Psoas muscle (tissue), 8 donors: ENCODE measurements at regions of chr20 and their contacts with region 1.

Region 1: DNA sequence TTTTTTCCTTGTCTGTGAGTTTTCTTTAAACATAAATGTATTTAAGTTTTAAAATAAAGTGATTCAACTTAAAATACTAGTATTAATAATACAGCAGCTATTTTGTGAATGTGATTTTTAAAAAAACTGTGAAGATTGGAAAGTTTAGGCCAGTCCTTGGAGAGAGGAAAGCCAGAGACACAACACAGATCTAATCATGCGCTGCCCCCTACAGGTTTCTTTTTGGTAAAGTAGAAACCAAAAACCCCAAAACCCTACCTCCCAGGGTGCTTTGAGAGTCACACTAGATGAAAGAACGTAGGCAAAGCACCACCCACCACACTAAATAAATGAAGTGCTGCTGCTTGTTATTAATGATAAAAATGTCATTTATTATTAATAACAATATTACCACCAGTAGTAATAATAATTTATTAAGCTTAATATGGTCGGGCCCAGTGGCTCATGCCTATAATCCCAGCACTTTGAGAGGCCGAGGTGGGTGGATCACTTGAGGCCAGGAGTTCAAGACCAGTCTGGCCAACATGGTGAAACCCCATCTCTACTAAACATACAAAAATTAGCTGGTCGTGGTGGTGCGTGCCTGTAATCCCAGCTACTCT is 33.7 kb downstream of the SLC9A8 start:
- DNase-seq: no peak
- ATAC-seq: peak; percentile 66 to 76 (median 67)
- H3K4me3 ChIP-seq: no peak overlapping the region
- H3K27ac ChIP-seq: no peak overlapping the region
- H3K4me1 ChIP-seq: peaks cover 12% of the 10 kb centered on the region
- H3K27me3 ChIP-seq: no peaks in the 10 kb centered on the region
- CTCF ChIP-seq: peak; percentile 62

Region 2: GRCh38 chr20:49541733-49542513 is 304.4 kb before region 1 on chr20:
- intact Hi-C with region 1: loop called in 1 of 2 experiments (anchors 10 kb)
- DNase-seq: peak; percentile 64 to 76
- ATAC-seq: peak; percentile 68 to 81 (median 74)
- H3K4me3 ChIP-seq: no peak overlapping the region
- H3K27ac ChIP-seq: no peak overlapping the region
- H3K4me1 ChIP-seq: no peaks in the 10 kb centered on the region
- H3K27me3 ChIP-seq: no peaks in the 10 kb centered on the region
- CTCF ChIP-seq: peak; percentile 77

Region 3: DNA sequence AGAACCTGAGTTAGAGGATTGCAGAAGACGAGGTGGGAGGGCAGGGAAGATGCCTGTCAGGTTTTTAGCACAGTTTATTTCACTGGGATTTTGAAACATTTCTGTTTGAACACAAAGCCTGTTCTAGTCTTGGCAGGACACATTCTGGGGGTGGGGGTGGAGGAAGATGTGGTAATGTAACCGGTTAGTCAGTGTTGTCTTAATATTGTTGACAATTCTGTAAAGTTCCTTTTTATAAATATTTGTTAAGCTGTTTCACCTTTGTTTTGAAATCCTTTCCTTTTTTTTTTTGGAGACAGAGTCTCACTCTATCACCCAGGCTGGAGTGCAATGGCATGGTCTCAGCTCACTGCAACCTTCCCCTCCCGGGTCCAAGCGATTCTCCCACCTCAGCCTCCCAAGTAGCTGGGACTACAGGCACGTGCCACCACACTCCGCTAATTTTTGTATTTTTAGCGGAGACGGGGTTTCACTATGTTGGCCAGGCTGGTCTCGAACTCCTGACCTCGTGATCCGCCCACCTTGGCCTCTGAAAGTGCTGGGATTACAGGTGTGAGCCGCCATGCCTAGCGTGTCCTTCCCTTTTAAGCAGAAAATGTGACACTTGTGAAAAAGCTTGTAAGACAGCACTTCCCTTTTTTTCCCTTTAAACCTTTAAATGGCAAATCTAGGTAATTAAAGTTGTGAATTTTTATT is 13.5 kb before region 1 on chr20:
- intact Hi-C with region 1: no loop called
- DNase-seq: no peak
- ATAC-seq: peak in 2 of 4 donors; percentile 36 to 49
- H3K4me3 ChIP-seq: no peak overlapping the region
- H3K27ac ChIP-seq: no peak overlapping the region
- H3K4me1 ChIP-seq: no peaks in the 10 kb centered on the region
- H3K27me3 ChIP-seq: no peaks in the 10 kb centered on the region
- CTCF ChIP-seq: no peak

Region 4: DNA sequence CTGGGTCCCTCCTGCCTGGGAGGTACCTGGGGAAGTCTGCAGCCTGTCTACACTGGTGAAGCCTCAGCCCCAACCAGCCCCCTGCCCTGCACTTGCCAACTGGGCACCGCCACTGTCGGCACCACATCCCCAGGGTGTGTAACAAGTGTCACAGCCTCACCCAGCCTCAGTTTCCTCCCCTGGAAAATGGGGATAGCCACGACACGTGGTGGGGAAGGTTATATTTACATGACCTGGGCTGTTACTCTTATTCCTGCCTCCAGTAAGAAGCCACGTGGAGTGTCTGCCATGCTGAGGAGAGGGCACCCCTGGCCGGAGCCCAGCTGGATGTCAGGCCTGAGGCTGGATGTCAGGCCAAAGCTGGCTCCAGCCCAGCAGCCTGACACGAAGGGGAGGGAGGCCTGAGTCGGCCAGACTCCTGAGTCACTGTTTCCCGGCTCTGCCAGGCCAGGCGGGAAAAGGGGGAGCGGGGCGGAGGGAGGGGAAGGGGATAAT is 181.4 kb after region 1 on chr20:
- intact Hi-C with region 1: no loop called
- DNase-seq: peak; percentile 65 to 71
- ATAC-seq: peak; percentile 47 to 76 (median 56)
- H3K4me3 ChIP-seq: no peak overlapping the region
- H3K27ac ChIP-seq: no peak overlapping the region
- H3K4me1 ChIP-seq: peaks cover 12% of the 10 kb centered on the region
- H3K27me3 ChIP-seq: no peaks in the 10 kb centered on the region
- CTCF ChIP-seq: no peak